Left ventricle myocardium inferior (tissue), 1 donor: ENCODE measurements at regions of chr3 and their contacts with region 1.

Region 1: DNA sequence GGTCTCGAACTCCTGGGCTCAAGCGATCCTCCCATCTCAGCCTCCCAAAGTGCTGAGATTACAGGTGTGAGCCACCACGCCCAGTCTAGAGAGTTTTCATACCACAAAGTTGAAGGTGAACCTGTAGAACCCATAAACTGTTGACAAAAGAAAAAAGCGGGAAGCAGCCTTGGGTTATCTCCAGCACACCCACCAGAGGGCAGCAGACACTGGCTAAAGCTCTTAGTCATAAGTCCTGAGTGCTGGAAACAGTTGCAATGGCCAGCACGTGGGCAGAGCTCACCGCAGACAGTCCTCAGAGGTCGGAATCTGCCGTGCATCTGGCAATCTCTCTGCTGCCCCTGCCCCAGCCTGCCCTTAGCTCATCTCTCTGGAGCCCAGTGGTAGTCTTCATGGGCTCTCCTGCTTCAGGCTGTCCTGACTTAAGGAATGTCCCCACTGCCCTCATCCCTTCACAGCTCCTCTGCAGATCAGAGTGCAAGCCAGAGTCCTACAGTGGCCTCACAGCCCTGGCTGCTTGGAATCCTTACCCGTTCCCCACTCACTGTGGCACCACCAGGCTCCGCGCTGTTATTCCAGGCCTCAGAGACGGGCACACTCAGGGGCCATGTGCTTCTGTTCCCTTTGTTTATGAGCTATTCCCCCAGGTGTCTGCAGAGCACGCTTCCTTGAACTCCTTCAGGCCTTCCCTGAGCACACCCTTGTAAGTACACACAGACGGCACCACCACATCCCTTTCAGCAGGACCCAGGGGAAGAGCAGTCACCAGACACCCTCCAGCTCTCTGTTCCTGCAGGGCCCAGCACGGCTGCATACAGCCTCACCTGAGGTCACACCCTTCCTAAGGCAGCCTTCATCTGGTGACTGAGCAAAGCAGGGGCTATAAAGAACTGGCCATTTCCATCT is 8.8 kb upstream of the ELP6 start:
- DNase-seq: peak; percentile 73
- H3K4me3 ChIP-seq: no peak overlapping the region
- H3K27ac ChIP-seq: no peak overlapping the region
- H3K4me1 ChIP-seq: peaks cover 4% of the 10 kb centered on the region
- H3K27me3 ChIP-seq: no peaks in the 10 kb centered on the region
- CTCF ChIP-seq: peak; percentile 89

Region 2: DNA sequence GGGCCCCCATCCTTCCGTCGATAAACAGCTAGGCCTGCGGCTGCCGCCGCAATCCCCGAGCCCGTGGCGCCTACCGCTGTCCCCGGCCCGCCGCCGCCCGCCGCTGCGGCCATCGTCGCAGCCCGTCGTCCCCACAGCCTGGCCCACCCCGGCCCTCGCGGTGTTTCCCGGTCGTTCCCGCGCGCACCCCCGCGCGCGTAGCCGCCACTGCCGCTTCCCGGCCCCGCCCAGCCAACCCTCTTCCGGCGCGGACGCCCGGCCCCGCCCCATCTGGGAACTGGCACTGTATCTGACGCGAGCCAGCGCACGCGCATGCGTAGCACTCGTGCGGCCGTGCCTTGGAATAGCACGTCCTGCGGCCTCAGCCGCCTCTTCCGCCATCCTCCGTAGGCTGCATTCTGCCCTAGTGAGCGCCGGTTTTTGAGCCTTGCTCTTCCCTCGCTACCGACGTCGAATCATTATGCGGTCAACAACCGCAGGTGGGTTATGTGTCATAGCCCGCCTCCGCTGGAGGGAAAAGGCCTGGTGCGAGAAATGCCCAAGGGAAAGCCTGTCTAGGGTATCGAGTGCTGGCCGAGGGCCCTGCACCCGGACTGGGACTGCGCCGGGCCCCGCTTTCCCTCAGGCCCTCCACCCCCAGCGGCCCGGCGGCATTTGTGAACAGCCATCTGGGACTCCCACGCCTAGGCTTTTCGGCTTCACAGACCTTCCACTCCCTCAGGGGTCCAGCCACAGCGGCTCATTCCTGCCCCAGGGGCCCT is 259.5 kb after region 1 on chr3 and contains the start of gene SMARCC1:
- intact Hi-C with region 1: loop called (anchors 5 kb)
- DNase-seq: peak; percentile 98
- H3K4me3 ChIP-seq: peak within 1 kb of the TSS; percentile 94
- H3K27ac ChIP-seq: peak within 1 kb of the TSS; percentile 98
- H3K4me1 ChIP-seq: peaks cover 54% of the 10 kb centered on the region
- H3K27me3 ChIP-seq: no peaks in the 10 kb centered on the region
- CTCF ChIP-seq: peak; percentile 2
- total RNA-seq, gene SMARCC1: 22.9 TPM